Psoas muscle (tissue), 8 donors: ENCODE measurements at regions of chr17 and their contacts with region 1.

Region 1: DNA sequence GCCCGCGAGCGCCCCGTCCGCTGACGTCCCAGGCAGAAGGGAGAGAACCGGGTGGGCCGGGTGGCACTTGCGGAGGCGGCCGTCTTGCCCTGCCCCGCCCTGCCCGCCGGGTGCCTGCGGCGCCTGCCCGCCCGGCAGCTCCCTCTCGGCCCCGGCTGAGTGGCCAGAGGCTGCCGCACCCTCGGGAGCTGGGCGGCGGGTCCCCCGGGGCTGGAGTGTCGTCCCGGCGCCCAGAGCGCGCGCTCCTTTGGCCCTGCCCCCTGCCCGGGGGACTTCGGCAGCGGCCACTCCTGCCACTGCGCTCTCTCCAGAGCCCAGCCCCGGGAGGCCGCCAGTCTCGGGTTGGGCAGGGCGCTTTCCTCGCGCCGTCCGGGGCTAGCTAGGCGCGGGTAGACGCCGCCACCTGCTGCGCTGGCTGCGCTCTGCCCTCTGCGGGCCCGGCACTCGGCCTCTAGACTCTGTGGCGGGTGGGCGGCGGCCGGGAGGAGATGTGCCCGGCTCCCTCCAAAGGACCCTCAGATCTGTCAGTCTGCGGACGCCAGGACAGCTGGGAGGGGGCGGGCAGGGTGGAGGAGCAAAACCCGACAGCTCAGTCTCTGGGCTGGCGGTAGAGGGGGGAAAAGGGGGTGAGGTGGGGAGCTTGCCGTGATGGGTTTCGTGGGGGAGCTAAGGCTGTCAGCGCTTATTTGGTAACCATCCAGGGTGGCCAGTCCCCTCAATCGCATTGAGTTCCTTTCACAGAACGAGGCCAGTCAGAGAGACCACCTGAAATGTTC is at the start of gene ST6GALNAC2:
- DNase-seq: peak; percentile 73 to 88
- ATAC-seq: peak; percentile 93 to 94 (median 94)
- H3K4me3 ChIP-seq: peak within 1 kb of the TSS; percentile 91
- H3K27ac ChIP-seq: peak within 1 kb of the TSS; percentile 82
- H3K4me1 ChIP-seq: peaks cover 6% of the 10 kb centered on the region
- H3K27me3 ChIP-seq: peaks cover 0 to 6% (median 4%) of the 10 kb centered on the region in 3 donors
- CTCF ChIP-seq: peak; percentile 53
- total RNA-seq, gene ST6GALNAC2: 8.1 to 17.8 (median 13.0) TPM

Region 2: DNA sequence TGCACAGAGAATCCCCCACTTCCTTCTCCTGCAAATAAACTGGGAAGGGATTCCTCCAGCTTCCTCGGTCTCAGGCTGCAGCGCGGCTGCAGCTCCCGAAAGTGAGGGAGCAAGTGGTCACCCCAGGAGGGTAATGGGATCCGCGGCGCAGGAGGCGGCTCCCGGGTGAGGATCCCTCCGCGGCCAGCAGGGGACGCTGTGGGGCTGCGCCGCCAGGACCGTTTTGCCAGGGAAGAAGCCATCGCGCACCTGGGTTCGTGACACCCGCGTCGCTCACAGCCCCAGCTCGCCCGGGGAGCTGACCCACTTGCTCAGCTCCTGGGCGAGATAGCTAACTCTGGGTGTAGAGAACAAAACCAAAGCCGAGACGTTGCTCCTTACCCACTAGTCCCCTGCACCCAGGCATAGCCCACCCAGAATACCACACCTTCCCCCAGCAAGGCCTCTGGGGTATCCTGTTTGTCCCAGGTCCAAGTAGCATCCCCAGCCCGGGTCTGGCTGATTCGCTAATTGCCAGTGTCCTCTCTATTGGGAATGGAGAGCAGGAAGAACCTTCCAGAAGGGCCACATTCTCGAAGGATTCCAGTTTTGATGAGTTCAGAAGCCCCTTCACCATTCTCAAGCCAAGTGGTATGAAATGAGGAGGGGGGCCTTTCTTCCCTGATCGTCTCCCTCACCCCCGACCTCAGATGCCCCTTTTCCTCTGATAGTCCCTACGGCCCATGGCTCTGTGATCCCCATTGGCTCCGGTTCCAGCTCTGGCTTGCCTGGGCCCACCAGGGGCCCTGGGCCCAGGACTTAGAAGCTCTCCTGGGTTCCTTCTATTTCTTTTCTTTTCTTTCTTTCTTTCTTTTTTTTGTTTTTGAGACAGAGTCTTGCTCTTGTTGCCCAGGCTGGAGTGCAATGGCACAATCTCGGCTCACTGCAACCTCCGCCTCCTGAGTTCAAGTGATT is 62.6 kb before region 1 on chr17:
- intact Hi-C with region 1: loop called (anchors 1 to 5 kb)
- DNase-seq: peak; percentile 76 to 90
- ATAC-seq: peak; percentile 83 to 92 (median 87)
- H3K4me3 ChIP-seq: no peak overlapping the region
- H3K27ac ChIP-seq: no peak overlapping the region
- H3K4me1 ChIP-seq: peaks cover 12% of the 10 kb centered on the region
- H3K27me3 ChIP-seq: peaks cover 0 to 1% (median 0%) of the 10 kb centered on the region in 3 donors
- CTCF ChIP-seq: peak; percentile 100

Region 3: GRCh38 chr17:76547184-76547641 is 38.8 kb before region 1 on chr17:
- intact Hi-C with region 1: loop called in 1 of 2 experiments (anchors 5 kb)
- DNase-seq: peak in 1 of 2 donors; percentile 40
- ATAC-seq: peak; percentile 74 to 80 (median 78)
- H3K4me3 ChIP-seq: no peak overlapping the region
- H3K27ac ChIP-seq: no peak overlapping the region
- H3K4me1 ChIP-seq: peaks cover 49% of the 10 kb centered on the region
- H3K27me3 ChIP-seq: no peaks in the 10 kb centered on the region
- CTCF ChIP-seq: peak; percentile 66

Region 4: GRCh38 chr17:76557368-76558197 is 28.4 kb before region 1 on chr17:
- intact Hi-C with region 1: loop called in 1 of 2 experiments (anchors 2 kb)
- DNase-seq: peak; percentile 93 to 97
- ATAC-seq: peak; percentile 92 to 94 (median 93)
- H3K4me3 ChIP-seq: peak overlapping the region; percentile 82
- H3K27ac ChIP-seq: peak overlapping the region; percentile 86
- H3K4me1 ChIP-seq: peaks cover 55% of the 10 kb centered on the region
- H3K27me3 ChIP-seq: no peaks in the 10 kb centered on the region
- CTCF ChIP-seq: peak; percentile 60

Region 5: DNA sequence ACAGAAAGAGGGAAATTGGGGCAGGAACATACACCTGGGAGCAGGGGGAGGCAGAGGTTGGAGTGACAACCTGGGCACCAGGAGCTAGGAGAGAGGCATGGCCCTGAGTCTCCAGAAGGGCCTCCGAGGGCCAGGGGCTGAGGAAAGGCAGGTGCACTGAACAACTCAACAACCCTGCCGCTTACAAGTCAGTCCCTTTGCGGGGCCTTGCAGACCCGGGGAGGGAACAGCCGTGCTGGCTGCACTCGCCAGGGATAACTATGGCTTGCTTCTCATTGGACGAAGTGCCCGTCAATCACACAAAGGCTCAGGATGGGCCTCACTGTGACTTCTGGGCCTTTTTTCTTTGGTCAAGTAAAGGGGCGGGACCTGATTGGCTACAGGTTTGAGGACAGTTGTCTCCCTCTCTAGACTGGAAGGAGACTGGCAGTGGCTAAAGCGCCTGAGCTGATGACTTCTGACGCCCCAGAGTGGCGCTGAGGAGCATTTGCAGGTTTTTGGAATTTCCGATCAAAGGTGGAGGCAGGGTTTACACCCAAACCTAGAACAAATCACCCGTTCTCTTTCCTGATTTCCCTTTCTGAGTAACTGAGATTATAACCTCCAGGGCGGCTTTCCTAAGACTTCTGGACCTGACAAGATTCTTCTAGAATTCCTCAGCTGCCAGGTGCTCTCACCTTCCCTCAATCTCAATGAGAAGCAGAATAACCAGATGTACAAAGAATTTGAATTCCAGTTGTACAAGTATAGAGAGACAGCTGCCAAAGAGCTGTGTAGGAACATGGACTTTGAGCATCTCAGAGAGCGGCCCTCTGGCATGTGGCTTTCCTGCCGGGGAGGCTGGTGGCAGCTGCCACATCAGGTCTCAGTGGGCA is 27.2 kb after region 1 on chr17:
- intact Hi-C with region 1: no loop called
- DNase-seq: no peak
- ATAC-seq: no peak
- H3K4me3 ChIP-seq: no peak overlapping the region
- H3K27ac ChIP-seq: no peak overlapping the region
- H3K4me1 ChIP-seq: no peaks in the 10 kb centered on the region
- H3K27me3 ChIP-seq: no peaks in the 10 kb centered on the region
- CTCF ChIP-seq: no peak

Region 6: DNA sequence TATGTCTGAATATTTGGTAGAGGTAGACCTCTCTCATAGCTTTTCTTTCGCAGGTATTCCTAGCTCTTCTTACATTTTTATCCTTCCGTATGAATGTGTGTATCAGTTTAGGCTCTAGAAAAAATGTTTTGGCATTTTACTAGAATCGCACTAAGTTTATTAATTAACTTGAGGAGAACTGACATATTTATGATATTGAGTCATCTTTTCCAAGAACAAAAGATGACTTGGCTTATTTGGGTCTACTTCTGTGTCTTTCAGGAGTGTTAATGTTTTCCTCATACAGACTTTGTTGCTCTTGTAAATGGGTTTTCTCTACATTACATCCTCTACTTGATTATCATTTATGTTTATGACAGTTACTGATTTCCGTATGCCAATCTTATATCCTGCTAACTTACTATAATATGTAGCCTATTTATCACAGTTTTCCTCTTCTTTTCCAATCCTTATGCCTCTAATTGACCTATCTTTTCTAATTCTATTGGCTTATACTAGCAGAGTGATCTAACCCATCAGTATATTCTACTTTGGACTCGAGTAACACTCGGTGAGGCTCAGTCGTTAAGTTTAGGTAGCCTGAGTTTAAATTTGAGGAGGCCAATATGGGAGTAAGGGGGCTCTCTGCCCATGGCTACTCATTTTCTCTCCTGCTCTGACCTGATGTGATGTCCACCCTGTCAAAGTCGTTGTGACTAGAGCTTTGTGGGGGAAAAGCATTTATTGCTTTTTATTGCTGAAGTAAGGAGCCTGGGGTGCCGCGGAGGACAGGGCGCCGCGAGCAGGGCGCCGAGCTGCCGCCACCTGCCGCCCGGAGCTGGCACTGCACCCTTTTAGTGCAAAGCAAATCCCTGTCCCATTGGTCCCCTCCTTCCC is 37.5 kb after region 1 on chr17:
- intact Hi-C with region 1: no loop called
- DNase-seq: peak; percentile 78 to 86
- ATAC-seq: peak; percentile 86 to 99 (median 94)
- H3K4me3 ChIP-seq: no peak overlapping the region
- H3K27ac ChIP-seq: no peak overlapping the region
- H3K4me1 ChIP-seq: peaks cover 4% of the 10 kb centered on the region
- H3K27me3 ChIP-seq: no peaks in the 10 kb centered on the region
- CTCF ChIP-seq: peak; percentile 95